CD4-positive, alpha-beta memory T cell (primary cell): ENCODE measurements at regions of chr10 and their contacts with region 1.

Region 1: GRCh38 chr10:113802997-113803396 is 50.9 kb downstream of the DCLRE1A start:
- DNase-seq: no peak
- H3K4me3 ChIP-seq: no peak overlapping the region
- H3K4me3 Mint-ChIP-seq: no peak overlapping the region
- H3K27ac ChIP-seq: no peak overlapping the region
- H3K27ac Mint-ChIP-seq: no peak overlapping the region
- H3K4me1 ChIP-seq: no peaks in the 10 kb centered on the region
- H3K4me1 Mint-ChIP-seq: peaks cover 0 to 3% (median 1%) of the 10 kb centered on the region in 4 donors
- H3K27me3 ChIP-seq: peaks cover 6% of the 10 kb centered on the region
- H3K27me3 Mint-ChIP-seq: peaks cover 6 to 15% of the 10 kb centered on the region in 2 donors

Region 2: DNA sequence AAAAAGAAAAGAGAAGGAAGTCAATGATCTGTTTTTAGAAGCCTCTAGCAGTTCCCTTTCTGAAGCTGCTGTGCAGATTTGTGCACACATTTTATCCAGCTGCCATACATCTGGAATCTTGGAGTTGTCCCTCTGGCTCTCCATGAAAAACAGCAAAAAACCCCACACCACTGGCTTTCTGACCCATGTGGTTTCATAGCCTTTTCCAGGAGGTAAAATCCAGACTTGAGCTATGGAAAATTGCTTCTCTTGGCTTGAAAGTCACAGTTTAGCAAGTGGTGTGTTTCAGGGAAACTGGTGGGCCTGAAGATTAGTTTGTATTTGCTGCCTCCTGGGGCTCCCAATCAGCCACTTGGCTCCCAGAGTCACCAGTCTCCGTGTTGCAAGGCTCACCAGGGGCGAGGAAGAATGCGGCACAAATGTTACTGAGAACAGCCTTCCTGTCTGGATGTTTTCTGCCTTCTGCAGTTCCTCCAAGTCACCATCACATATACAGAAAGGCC is 190.5 kb after region 1 on chr10:
- CTCF ChIA-PET with region 1: no interaction called
- POLR2A ChIA-PET with region 1: no interaction called
- intact Hi-C with region 1: loop called (anchors 1 kb)
- DNase-seq: peak in 1 of 5 donors; percentile 6
- H3K4me3 ChIP-seq: no peak overlapping the region
- H3K4me3 Mint-ChIP-seq: no peak overlapping the region
- H3K27ac ChIP-seq: no peak overlapping the region
- H3K27ac Mint-ChIP-seq: no peak overlapping the region
- H3K4me1 ChIP-seq: no peaks in the 10 kb centered on the region
- H3K4me1 Mint-ChIP-seq: peaks cover 0 to 4% (median under 1%) of the 10 kb centered on the region in 4 donors
- H3K27me3 ChIP-seq: no peaks in the 10 kb centered on the region
- H3K27me3 Mint-ChIP-seq: peaks cover 8 to 25% of the 10 kb centered on the region in 2 donors

Region 3: GRCh38 chr10:114239117-114239993 is 436.4 kb after region 1 on chr10 and contains the start of gene VWA2:
- CTCF ChIA-PET with region 1: no interaction called
- POLR2A ChIA-PET with region 1: no interaction called
- intact Hi-C with region 1: loop called (anchors 5 kb)
- DNase-seq: peak in 2 of 5 donors; percentile 1 to 5
- H3K4me3 ChIP-seq: no peak within 1 kb of the TSS
- H3K4me3 Mint-ChIP-seq: peak within 1 kb of the TSS in 7 of 8 donors; percentile 25 to 69 (median 47)
- H3K27ac ChIP-seq: no peak within 1 kb of the TSS
- H3K27ac Mint-ChIP-seq: no peak within 1 kb of the TSS
- H3K4me1 ChIP-seq: no peaks in the 10 kb centered on the region
- H3K4me1 Mint-ChIP-seq: peaks cover 0 to 10% (median 7%) of the 10 kb centered on the region in 4 donors
- H3K27me3 ChIP-seq: peaks cover 27% of the 10 kb centered on the region
- H3K27me3 Mint-ChIP-seq: peaks cover 46 to 50% of the 10 kb centered on the region in 2 donors
- total RNA-seq, gene VWA2: not detected